A673 (cell line): ENCODE measurements at regions of chr11 and their contacts with region 1.

Region 1: GRCh38 chr11:14907411-14908213 is 15.6 kb upstream of the CYP2R1 start:
- DNase-seq: peak; percentile 84
- H3K4me3 ChIP-seq: peak overlapping the region; percentile 13
- H3K27ac ChIP-seq: peak overlapping the region; percentile 75
- H3K4me1 ChIP-seq: peaks cover 21% of the 10 kb centered on the region
- H3K27me3 ChIP-seq: no peaks in the 10 kb centered on the region
- CTCF ChIP-seq: peak; percentile 83

Region 2: GRCh38 chr11:14537134-14537599 is 370.4 kb before region 1 on chr11:
- CTCF ChIA-PET with region 1: interaction called, 3 read pairs
- POLR2A ChIA-PET with region 1: no interaction called
- intact Hi-C with region 1: loop called (anchors 5 kb)
- DNase-seq: peak; percentile 43
- H3K4me3 ChIP-seq: no peak overlapping the region
- H3K27ac ChIP-seq: no peak overlapping the region
- H3K4me1 ChIP-seq: no peaks in the 10 kb centered on the region
- H3K27me3 ChIP-seq: no peaks in the 10 kb centered on the region
- CTCF ChIP-seq: peak; percentile 73

Region 3: DNA sequence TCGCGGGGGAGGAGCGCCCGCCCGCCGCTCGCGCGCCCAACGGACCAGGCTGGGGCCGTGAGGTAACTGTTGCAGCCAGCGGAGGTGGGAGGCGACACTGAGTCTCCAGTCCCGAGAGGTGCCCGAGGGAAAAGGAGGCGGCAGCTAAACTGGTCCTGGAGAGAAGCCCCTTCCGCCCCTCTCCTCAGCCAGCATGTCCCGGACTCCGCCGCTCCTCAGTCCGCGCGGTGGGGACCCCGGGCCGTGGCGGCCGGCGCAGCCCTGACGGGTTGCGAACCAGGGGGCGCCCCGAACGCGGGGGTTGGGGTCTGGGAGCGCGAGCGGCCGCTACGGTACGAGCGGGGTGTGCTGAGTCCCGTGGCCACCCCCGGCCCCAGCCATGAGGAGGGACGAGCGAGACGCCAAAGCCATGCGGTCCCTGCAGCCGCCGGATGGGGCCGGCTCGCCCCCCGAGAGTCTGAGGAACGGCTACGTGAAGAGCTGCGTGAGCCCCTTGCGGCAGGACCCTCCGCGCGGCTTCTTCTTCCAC is 263.9 kb before region 1 on chr11 and contains the start of gene PDE3B:
- CTCF ChIA-PET with region 1: no interaction called
- POLR2A ChIA-PET with region 1: no interaction called
- intact Hi-C with region 1: loop called (anchors 5 kb)
- DNase-seq: peak; percentile 66
- H3K4me3 ChIP-seq: peak within 1 kb of the TSS; percentile 70
- H3K27ac ChIP-seq: no peak within 1 kb of the TSS
- H3K4me1 ChIP-seq: peaks cover 7% of the 10 kb centered on the region
- H3K27me3 ChIP-seq: peaks cover 25% of the 10 kb centered on the region
- CTCF ChIP-seq: no peak
- total RNA-seq, gene PDE3B: 3.8 and 4.8 TPM in 2 replicates

Region 4: DNA sequence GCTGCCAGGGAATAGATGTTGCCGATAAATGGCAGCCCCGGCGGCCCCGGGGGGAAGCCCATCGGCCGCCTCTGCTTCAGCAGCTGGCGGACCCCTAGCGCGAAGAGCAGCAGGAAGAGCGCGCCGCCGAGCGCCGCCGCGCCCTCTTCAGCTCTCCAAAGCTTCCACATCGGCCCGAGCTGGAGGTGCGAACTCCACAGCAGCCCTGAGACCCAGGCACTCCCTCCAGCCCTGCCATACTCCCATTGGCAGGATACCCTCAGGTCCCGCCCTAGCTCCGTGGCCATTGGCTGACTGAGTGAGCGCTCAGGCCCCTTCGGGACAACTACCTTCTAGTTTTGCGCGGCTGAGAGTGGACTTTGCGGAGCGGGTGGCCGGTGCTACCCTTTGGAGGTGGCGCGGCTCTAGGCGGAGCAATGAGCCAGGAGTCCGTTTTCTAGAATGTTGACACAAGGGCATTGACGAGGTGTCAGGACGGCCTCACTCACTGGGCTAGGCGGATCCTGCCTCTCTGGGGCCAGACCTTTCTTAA is 15.5 kb before region 1 on chr11 and contains the start of gene CYP2R1:
- CTCF ChIA-PET with region 1: interaction called, 14 read pairs
- POLR2A ChIA-PET with region 1: no interaction called
- intact Hi-C with region 1: no loop called
- DNase-seq: peak; percentile 96
- H3K4me3 ChIP-seq: peak within 1 kb of the TSS; percentile 63
- H3K27ac ChIP-seq: peak within 1 kb of the TSS; percentile 83
- H3K4me1 ChIP-seq: peaks cover 8% of the 10 kb centered on the region
- H3K27me3 ChIP-seq: no peaks in the 10 kb centered on the region
- CTCF ChIP-seq: no peak
- total RNA-seq, gene CYP2R1: 16.2 and 17.6 TPM in 2 replicates

Region 5: GRCh38 chr11:15074206-15075161 is 166.9 kb after region 1 on chr11:
- CTCF ChIA-PET with region 1: interaction called, 52 read pairs
- POLR2A ChIA-PET with region 1: no interaction called
- intact Hi-C with region 1: loop called (anchors 1 kb)
- DNase-seq: peak; percentile 86
- H3K4me3 ChIP-seq: peak overlapping the region; percentile 48
- H3K27ac ChIP-seq: no peak overlapping the region
- H3K4me1 ChIP-seq: no peaks in the 10 kb centered on the region
- H3K27me3 ChIP-seq: no peaks in the 10 kb centered on the region
- CTCF ChIP-seq: peak; percentile 78

Region 6: GRCh38 chr11:15189641-15190365 is 282.2 kb after region 1 on chr11:
- CTCF ChIA-PET with region 1: no interaction called
- POLR2A ChIA-PET with region 1: no interaction called
- intact Hi-C with region 1: no loop called
- DNase-seq: no peak
- H3K4me3 ChIP-seq: no peak overlapping the region
- H3K27ac ChIP-seq: no peak overlapping the region
- H3K4me1 ChIP-seq: no peaks in the 10 kb centered on the region
- H3K27me3 ChIP-seq: no peaks in the 10 kb centered on the region
- CTCF ChIP-seq: no peak

Region 7: GRCh38 chr11:15291885-15292284 is 384.3 kb after region 1 on chr11:
- CTCF ChIA-PET with region 1: no interaction called
- POLR2A ChIA-PET with region 1: no interaction called
- intact Hi-C with region 1: no loop called
- DNase-seq: peak; percentile 40
- H3K4me3 ChIP-seq: no peak overlapping the region
- H3K27ac ChIP-seq: no peak overlapping the region
- H3K4me1 ChIP-seq: no peaks in the 10 kb centered on the region
- H3K27me3 ChIP-seq: no peaks in the 10 kb centered on the region
- CTCF ChIP-seq: no peak